ENCODE measurements at regions of chr1 and their contacts with region 1.

Region 1: DNA sequence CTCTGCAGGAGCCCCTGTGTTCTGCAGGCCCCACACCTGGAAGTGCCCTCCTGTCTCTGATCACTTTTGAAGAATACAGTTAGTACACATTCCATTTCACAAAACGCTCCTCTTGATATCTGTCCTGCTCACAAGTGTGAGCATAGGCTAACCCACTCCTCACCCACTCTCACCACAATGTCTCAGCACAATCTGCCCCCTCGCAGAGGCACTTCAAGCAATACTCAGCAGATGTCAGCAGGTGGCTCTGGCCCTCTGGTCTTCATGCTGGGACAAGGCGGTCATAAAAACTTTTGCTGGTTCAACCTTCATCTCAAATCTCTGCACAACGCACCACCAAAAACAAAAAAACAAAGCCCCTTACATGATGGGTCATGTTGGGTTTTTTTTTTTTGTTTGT is 671.2 kb downstream of the MATN1 start:
- DNase-seq: no peak
- H3K4me3 ChIP-seq: no peak overlapping the region
- H3K27ac ChIP-seq: no peak overlapping the region
- H3K4me1 ChIP-seq: no peaks in the 10 kb centered on the region
- H3K27me3 ChIP-seq: no peaks in the 10 kb centered on the region
- CTCF ChIP-seq: no peak

Region 2: GRCh38 chr1:30101477-30102227 is 49.5 kb after region 1 on chr1:
- intact Hi-C with region 1: loop called (anchors 5 kb)
- DNase-seq: peak; percentile 42
- H3K4me3 ChIP-seq: no peak overlapping the region
- H3K27ac ChIP-seq: no peak overlapping the region
- H3K4me1 ChIP-seq: no peaks in the 10 kb centered on the region
- H3K27me3 ChIP-seq: no peaks in the 10 kb centered on the region
- CTCF ChIP-seq: no peak

Measured in colonic mucosa (tissue), 4 donors.